ENCODE measurements at regions of chr18 and their contacts with region 1.

Region 1: GRCh38 chr18:48600456-48601090 is 61.7 kb downstream of the CTIF start:
- DNase-seq: no peak
- H3K4me3 ChIP-seq: no peak overlapping the region
- CTCF ChIP-seq: no peak

Region 2: GRCh38 chr18:48504819-48505218 is 95.8 kb before region 1 on chr18:
- in situ Hi-C with region 1: loop called (anchors 5 kb)
- DNase-seq: no peak
- H3K4me3 ChIP-seq: no peak overlapping the region
- CTCF ChIP-seq: no peak

Measured in astrocyte of the cerebellum (primary cell).